ENCODE measurements at regions of chr7 and their contacts with region 1.

Region 1: GRCh38 chr7:100719523-100720319 is 547 bp upstream of the EPO start:
- DNase-seq: peak in 1 of 2 experiments; percentile 50
- H3K4me3 ChIP-seq: no peak overlapping the region
- H3K27ac ChIP-seq: no peak overlapping the region
- H3K4me1 ChIP-seq: peaks cover 11% of the 10 kb centered on the region; the same call in 1 of the 2 replicates
- H3K27me3 ChIP-seq: no peaks in the 10 kb centered on the region
- CTCF ChIP-seq: peak; percentile 50; the same call in 1 of the 2 replicates

Region 2: GRCh38 chr7:100852048-100852872 is 132.5 kb after region 1 on chr7 and contains the start of gene SLC12A9:
- CTCF ChIA-PET with region 1: interaction called, 16 read pairs
- POLR2A ChIA-PET with region 1: no interaction called
- intact Hi-C with region 1: loop called (anchors 1 kb)
- DNase-seq: peak; percentile 76 to 93
- H3K4me3 ChIP-seq: peak within 1 kb of the TSS; percentile 97
- H3K27ac ChIP-seq: no peak within 1 kb of the TSS
- H3K4me1 ChIP-seq: peaks cover 9% of the 10 kb centered on the region
- H3K27me3 ChIP-seq: no peaks in the 10 kb centered on the region
- CTCF ChIP-seq: peak; percentile 95
- total RNA-seq, gene SLC12A9: 34.7 and 36.7 TPM in 2 replicates

Region 3: DNA sequence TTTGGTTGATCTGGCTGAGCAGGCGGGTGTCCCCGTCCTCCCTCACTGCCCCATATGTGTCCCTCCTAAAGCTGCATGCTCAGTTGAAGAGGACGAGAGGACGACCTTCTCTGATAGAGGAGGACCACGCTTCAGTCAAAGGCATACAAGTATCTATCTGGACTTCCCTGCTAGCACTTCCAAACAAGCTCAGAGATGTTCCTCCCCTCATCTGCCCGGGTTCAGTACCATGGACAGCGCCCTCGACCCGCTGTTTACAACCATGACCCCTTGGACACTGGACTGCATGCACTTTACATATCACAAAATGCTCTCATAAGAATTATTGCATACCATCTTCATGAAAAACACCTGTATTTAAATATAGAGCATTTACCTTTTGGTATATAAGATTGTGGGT is 338.6 kb after region 1 on chr7:
- CTCF ChIA-PET with region 1: interaction called, 11 read pairs
- POLR2A ChIA-PET with region 1: no interaction called
- intact Hi-C with region 1: no loop called
- DNase-seq: peak in 1 of 2 experiments; percentile 58
- H3K4me3 ChIP-seq: no peak overlapping the region
- H3K27ac ChIP-seq: no peak overlapping the region
- H3K4me1 ChIP-seq: no peaks in the 10 kb centered on the region
- H3K27me3 ChIP-seq: peaks cover 61% of the 10 kb centered on the region
- CTCF ChIP-seq: no peak

Measured in PC-9 (cell line).